Heart right ventricle (tissue), 16 donors: ENCODE measurements at regions of chr9 and their contacts with region 1.

Region 1: GRCh38 chr9:82923448-82924249 is 139.3 kb downstream of the RASEF start:
- DNase-seq: no peak
- ATAC-seq: no peak
- H3K4me3 ChIP-seq: no peak overlapping the region
- H3K27ac ChIP-seq: no peak overlapping the region
- H3K4me1 ChIP-seq: no peaks in the 10 kb centered on the region
- H3K27me3 ChIP-seq: peaks cover 0 to 19% (median 6%) of the 10 kb centered on the region in 7 donors
- CTCF ChIP-seq: no peak

Region 2: DNA sequence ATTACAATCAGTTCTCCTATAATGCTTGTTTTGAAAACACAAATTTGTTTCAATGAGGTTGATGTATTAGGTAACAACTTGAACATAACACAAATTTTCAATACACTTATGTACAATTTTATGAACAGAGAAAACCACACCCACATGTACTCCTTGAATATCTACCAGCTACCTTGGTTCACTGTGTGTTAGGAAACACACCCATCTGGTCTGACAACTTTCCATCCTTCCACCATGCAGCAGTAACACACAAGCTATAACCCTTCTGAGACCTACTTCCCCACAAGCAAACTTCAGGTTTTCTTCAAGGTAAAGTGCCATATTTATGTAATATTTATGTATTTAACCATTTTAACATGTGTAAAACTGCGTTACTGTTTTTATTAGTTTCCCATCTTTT is 820.6 kb after region 1 on chr9:
- intact Hi-C with region 1: loop called in 1 of 10 experiments (anchors 5 kb)
- DNase-seq: no peak
- ATAC-seq: no peak
- H3K4me3 ChIP-seq: no peak overlapping the region
- H3K27ac ChIP-seq: no peak overlapping the region
- H3K4me1 ChIP-seq: no peaks in the 10 kb centered on the region
- H3K27me3 ChIP-seq: no peaks in the 10 kb centered on the region
- CTCF ChIP-seq: no peak